OCI-LY7 (cell line): ENCODE measurements at regions of chrX and their contacts with region 1.

Region 1: DNA sequence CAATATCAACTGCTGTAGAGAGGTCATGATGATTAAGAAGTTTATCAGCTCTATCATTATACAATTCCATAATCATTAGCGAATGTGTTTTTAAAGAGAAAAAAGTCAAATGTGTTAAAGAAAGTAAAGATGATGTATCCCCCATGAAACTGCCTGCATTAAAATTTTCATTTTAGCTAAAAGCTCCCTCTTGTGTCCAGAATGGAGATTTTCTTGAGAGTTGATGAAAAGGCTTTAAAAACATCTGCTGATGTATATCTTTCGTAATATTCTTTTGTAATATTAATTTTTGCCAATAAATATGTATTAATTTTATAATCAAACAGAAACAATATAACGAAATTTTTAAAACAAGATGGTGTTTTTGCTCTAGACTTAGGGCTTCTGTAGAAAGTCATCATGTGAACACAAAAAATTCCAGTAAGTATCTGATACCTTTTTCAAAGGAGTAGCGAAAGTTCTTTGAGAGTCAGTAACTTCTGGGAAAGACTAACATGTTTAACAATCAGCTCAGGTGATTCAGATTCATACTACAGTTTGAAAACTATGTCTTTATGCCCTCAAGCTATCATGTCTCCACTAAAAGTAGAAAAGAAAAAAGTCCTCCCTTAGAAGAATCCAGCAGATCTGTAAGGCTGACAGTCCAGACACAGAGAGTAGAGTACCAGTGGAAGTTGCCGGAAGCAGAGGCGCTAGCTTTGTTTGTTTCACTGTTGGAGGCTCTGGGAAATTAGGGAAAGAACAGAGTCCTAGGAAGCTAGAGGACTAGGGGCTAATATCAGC is 52.2 kb upstream of the LHFPL1 start:
- DNase-seq: peak; percentile 18
- H3K4me3 ChIP-seq: no peak overlapping the region
- H3K27ac ChIP-seq: no peak overlapping the region
- H3K4me1 ChIP-seq: peaks cover 11% of the 10 kb centered on the region
- CTCF ChIP-seq: peak; percentile 67

Region 2: GRCh38 chrX:111728096-111728495 is 1003.9 kb before region 1 on chrX:
- CTCF ChIA-PET with region 1: no interaction called
- POLR2A ChIA-PET with region 1: no interaction called
- intact Hi-C with region 1: no loop called
- DNase-seq: no peak
- H3K4me3 ChIP-seq: no peak overlapping the region
- H3K27ac ChIP-seq: no peak overlapping the region
- H3K4me1 ChIP-seq: no peaks in the 10 kb centered on the region
- CTCF ChIP-seq: no peak

Region 3: DNA sequence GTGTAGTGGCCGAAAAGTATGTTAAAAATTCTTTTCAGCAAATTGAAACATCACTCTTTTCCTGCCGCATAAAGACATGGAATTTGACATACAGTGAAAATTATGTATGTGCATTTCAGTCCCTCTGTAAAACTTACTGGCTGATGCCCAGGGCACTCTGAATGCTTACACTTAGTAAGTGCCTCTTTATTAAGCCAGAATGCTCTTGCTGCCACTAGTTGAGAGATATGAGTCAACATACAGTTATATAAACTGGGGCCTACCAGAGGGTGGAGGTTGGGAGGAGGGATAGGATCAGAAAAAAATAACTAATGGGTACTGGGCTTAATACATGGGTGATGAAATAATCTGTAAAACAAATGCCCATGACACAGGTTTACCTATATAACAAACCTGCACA is 611.3 kb before region 1 on chrX:
- CTCF ChIA-PET with region 1: no interaction called
- POLR2A ChIA-PET with region 1: no interaction called
- intact Hi-C with region 1: no loop called
- DNase-seq: no peak
- H3K4me3 ChIP-seq: no peak overlapping the region
- H3K27ac ChIP-seq: no peak overlapping the region
- H3K4me1 ChIP-seq: no peaks in the 10 kb centered on the region
- CTCF ChIP-seq: no peak

Region 4: DNA sequence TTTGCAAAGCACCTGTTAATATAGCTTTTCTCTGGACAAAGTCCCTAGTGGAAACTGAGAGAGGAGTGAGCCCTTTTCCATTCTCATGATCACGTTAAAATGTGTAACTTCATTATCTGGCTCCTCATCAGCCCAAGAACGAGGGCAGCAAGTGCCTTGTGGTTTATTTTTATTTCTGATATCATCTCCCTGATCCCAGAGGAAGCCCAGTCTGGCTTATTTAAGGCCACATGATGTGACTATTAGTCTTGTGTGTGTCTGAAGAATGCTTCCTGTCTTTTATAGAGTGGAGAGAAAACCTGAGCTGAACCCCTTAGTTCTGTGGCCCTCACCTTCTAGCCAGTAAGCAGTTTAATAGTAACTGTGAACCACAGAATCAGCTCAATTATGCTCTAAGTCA is 119.4 kb before region 1 on chrX:
- CTCF ChIA-PET with region 1: no interaction called
- POLR2A ChIA-PET with region 1: interaction called, 10 read pairs
- intact Hi-C with region 1: no loop called
- DNase-seq: no peak
- H3K4me3 ChIP-seq: no peak overlapping the region
- H3K27ac ChIP-seq: no peak overlapping the region
- H3K4me1 ChIP-seq: no peaks in the 10 kb centered on the region
- CTCF ChIP-seq: no peak

Region 5: GRCh38 chrX:112746812-112747595 is 15.0 kb after region 1 on chrX:
- CTCF ChIA-PET with region 1: no interaction called
- POLR2A ChIA-PET with region 1: no interaction called
- intact Hi-C with region 1: no loop called
- DNase-seq: no peak
- H3K4me3 ChIP-seq: no peak overlapping the region
- H3K27ac ChIP-seq: no peak overlapping the region
- H3K4me1 ChIP-seq: no peaks in the 10 kb centered on the region
- CTCF ChIP-seq: no peak